OCI-LY7 (cell line): ENCODE measurements at regions of chr1 and their contacts with region 1.

Region 1: GRCh38 chr1:24744911-24745710 is at the start of gene CLIC4:
- DNase-seq: peak; percentile 99
- H3K4me3 ChIP-seq: peak within 1 kb of the TSS; percentile 94
- H3K27ac ChIP-seq: peak within 1 kb of the TSS; percentile 93
- H3K4me1 ChIP-seq: peaks cover 63% of the 10 kb centered on the region
- CTCF ChIP-seq: 0 out of 2 replicates have a peak, but pooled peaks have one; percentile 31
- total RNA-seq, gene CLIC4: 35.5 and 35.7 TPM in 2 replicates

Region 2: DNA sequence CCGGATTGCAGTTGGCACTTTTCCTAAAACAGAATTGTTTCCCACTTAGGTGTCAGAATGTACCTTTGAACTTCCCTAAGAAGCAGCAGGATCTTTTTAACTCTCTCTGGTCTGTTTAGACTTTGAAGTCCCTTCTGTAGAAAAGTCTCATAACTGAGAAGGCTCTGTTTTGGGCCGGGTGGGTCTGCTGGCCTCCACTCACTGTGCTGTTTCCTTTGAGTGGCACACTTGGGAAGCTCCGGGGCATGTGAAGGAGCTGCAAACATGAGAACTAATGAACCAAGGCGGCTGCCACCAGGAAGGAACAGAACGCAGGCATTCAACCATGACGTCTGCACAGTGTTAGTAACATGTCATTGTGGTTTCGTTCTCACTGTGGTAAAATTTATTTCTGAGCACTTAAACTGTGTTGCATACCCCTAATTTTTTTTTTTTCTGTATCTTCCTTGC is 208.7 kb before region 1 on chr1:
- CTCF ChIA-PET with region 1: no interaction called
- POLR2A ChIA-PET with region 1: no interaction called
- intact Hi-C with region 1: loop called (anchors 10 kb)
- DNase-seq: peak; percentile 87
- H3K4me3 ChIP-seq: peak overlapping the region; percentile 65
- H3K27ac ChIP-seq: peak overlapping the region; percentile 89
- H3K4me1 ChIP-seq: peaks cover 82% of the 10 kb centered on the region
- CTCF ChIP-seq: no peak

Region 3: GRCh38 chr1:24688621-24689195 is 56.4 kb before region 1 on chr1:
- CTCF ChIA-PET with region 1: no interaction called
- POLR2A ChIA-PET with region 1: interaction called, 4 read pairs
- intact Hi-C with region 1: loop called (anchors 2 kb)
- DNase-seq: peak; percentile 74
- H3K4me3 ChIP-seq: no peak overlapping the region
- H3K27ac ChIP-seq: no peak overlapping the region
- H3K4me1 ChIP-seq: no peaks in the 10 kb centered on the region
- CTCF ChIP-seq: peak; percentile 95

Region 4: GRCh38 chr1:24830680-24831272 is 85.7 kb after region 1 on chr1:
- CTCF ChIA-PET with region 1: no interaction called
- POLR2A ChIA-PET with region 1: interaction called, 4 read pairs
- intact Hi-C with region 1: loop called (anchors 2 kb)
- DNase-seq: peak; percentile 69
- H3K4me3 ChIP-seq: no peak overlapping the region
- H3K27ac ChIP-seq: no peak overlapping the region
- H3K4me1 ChIP-seq: peaks cover 39% of the 10 kb centered on the region
- CTCF ChIP-seq: peak; percentile 99

Region 5: GRCh38 chr1:25430666-25431505 is 685.8 kb after region 1 on chr1 and contains the start of gene MACO1:
- CTCF ChIA-PET with region 1: no interaction called
- POLR2A ChIA-PET with region 1: no interaction called
- intact Hi-C with region 1: loop called (anchors 10 kb)
- DNase-seq: peak; percentile 97
- H3K4me3 ChIP-seq: peak within 1 kb of the TSS; percentile 94
- H3K27ac ChIP-seq: peak within 1 kb of the TSS; percentile 57
- H3K4me1 ChIP-seq: peaks cover 46% of the 10 kb centered on the region
- CTCF ChIP-seq: peak; percentile 31; the same call in 1 of the 2 replicates
- total RNA-seq, gene MACO1: 8.8 and 11.8 TPM in 2 replicates